ENCODE measurements at regions of chr2 and their contacts with region 1.

Region 1: GRCh38 chr2:10647886-10648605 is 41.7 kb downstream of the NOL10 start:
- DNase-seq: no peak
- ATAC-seq: peak in 7 of 8 donors; percentile 38 to 76 (median 57)
- H3K4me3 ChIP-seq: no peak overlapping the region
- H3K27ac ChIP-seq: peak overlapping the region in 5 of 10 donors; percentile 26 to 46 (median 32)
- H3K4me1 ChIP-seq: peaks cover 0 to 13% (median 0%) of the 10 kb centered on the region in 9 donors
- H3K27me3 ChIP-seq: no peaks in the 10 kb centered on the region
- CTCF ChIP-seq: no peak

Region 2: GRCh38 chr2:9961013-9961412 is 687.0 kb before region 1 on chr2:
- intact Hi-C with region 1: no loop called
- DNase-seq: no peak
- ATAC-seq: no peak
- H3K4me3 ChIP-seq: no peak overlapping the region
- H3K27ac ChIP-seq: no peak overlapping the region
- H3K4me1 ChIP-seq: no peaks in the 10 kb centered on the region
- H3K27me3 ChIP-seq: no peaks in the 10 kb centered on the region
- CTCF ChIP-seq: no peak

Region 3: DNA sequence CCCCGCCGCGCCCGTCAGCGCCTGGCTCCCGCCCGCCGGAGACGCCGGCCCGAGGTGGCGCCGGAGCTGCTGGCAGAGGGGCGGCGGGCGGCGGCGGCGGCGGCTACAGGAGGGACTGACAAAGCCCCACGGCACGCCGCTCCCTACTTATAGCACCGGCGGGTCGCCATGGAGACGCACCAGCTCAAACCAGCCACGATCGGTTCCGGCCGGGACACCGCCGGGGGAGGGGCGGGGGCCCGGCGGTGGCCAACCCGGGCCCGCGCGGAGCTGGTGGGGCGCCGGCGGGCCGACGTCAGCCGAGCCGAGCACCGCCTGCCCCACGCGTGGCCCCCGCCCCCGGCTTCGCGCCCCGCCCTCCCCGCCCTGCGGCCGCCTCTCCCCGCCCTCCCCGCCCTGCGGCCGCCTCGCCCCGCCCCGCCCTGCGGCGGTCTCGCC is 199.8 kb before region 1 on chr2 and contains the start of gene ODC1:
- intact Hi-C with region 1: loop called in 2 of 10 experiments (anchors 5 to 10 kb)
- DNase-seq: peak; percentile 92 to 94
- ATAC-seq: peak; percentile 83 to 93 (median 91)
- H3K4me3 ChIP-seq: peak within 1 kb of the TSS; percentile 56 to 83 (median 68)
- H3K27ac ChIP-seq: peak within 1 kb of the TSS; percentile 81 to 96 (median 90)
- H3K4me1 ChIP-seq: peaks cover 8 to 54% (median 29%) of the 10 kb centered on the region in 9 donors
- H3K27me3 ChIP-seq: no peaks in the 10 kb centered on the region
- CTCF ChIP-seq: no peak
- total RNA-seq, gene ODC1: 25.4 to 92.8 (median 56.0) TPM

Region 4: DNA sequence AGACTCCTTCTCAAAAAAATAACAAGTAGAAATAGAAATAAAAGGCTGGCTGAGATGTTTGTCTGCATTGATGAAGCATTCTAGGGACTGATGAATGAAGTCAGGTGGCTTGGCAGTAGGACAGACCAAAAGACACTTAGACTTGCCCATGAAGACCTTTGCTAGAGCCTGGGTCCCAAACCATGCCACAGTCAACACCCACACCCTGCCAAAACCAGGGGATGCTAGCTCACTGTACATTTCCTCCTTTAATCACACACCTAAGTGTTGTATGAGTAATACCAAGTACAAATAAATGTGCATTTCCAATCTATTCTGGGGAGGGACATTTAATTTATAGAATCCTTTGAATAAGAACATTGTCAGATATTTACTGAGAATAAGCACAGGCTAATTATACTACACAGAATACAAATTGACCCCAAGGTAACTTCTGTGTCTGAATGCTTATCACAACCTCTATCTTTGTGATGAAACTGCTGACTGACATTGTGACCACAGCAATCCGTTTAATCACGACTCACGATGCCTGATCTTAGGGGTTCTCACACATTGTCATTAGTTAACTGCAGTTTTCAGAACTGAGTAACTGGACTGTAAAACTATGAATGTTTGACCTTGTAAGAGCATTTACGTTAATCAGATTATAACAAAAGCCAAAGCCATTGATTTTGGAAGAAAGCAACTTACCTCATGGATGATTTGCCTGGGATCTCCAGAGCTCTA is 52.2 kb after region 1 on chr2:
- intact Hi-C with region 1: no loop called
- DNase-seq: no peak
- ATAC-seq: no peak
- H3K4me3 ChIP-seq: no peak overlapping the region
- H3K27ac ChIP-seq: no peak overlapping the region
- H3K4me1 ChIP-seq: no peaks in the 10 kb centered on the region
- H3K27me3 ChIP-seq: no peaks in the 10 kb centered on the region
- CTCF ChIP-seq: no peak